Left cardiac atrium (tissue), 4 donors: ENCODE measurements at regions of chr5 and their contacts with region 1.

Region 1: GRCh38 chr5:147628058-147628895 is 118.4 kb upstream of the DPYSL3 start:
- DNase-seq: peak; percentile 35
- ATAC-seq: peak; percentile 57 to 79

Region 2: GRCh38 chr5:147822686-147823491 is 194.6 kb after region 1 on chr5:
- intact Hi-C with region 1: loop called (anchors 2 to 5 kb)
- DNase-seq: peak; percentile 28
- ATAC-seq: peak; percentile 82 to 85

Region 3: GRCh38 chr5:147831465-147831864 is 203.2 kb after region 1 on chr5 and contains the start of gene SPINK1:
- intact Hi-C with region 1: loop called in 1 of 2 experiments (anchors 5 kb)
- DNase-seq: no peak
- ATAC-seq: no peak
- total RNA-seq, gene SPINK1: not detected

Region 4: GRCh38 chr5:147935032-147935431 is 306.8 kb after region 1 on chr5:
- intact Hi-C with region 1: loop called in 1 of 2 experiments (anchors 5 kb)
- DNase-seq: no peak
- ATAC-seq: peak; percentile 70 to 84